ENCODE measurements at regions of chr1 and their contacts with region 1.

Region 1: DNA sequence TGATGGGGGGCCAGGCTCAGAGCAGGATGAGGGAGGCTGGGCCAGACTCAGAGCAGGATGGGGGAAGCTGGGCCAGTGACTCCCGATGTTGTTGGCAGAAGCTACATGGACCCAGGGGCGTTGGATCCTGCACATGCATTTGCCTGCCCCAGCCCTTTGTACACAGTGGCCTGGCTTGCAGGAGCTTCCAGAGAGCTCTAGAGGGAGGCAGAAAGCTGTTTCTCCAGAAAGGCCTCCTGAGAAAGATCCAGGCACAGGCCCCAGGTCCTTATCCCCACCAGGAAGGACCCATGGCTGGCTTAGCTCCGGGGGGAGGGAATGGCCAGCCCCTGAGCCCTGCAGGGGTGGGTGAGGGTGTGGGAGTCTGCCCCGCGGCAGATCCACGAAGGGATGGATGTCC is 106.6 kb upstream of the ACTRT2 start:
- DNase-seq: no peak

Region 2: GRCh38 chr1:1775327-1776226 is 1139.1 kb before region 1 on chr1:
- intact Hi-C with region 1: no loop called
- DNase-seq: no peak

Region 3: GRCh38 chr1:2845869-2846268 is 68.8 kb before region 1 on chr1:
- intact Hi-C with region 1: no loop called
- DNase-seq: no peak

Region 4: DNA sequence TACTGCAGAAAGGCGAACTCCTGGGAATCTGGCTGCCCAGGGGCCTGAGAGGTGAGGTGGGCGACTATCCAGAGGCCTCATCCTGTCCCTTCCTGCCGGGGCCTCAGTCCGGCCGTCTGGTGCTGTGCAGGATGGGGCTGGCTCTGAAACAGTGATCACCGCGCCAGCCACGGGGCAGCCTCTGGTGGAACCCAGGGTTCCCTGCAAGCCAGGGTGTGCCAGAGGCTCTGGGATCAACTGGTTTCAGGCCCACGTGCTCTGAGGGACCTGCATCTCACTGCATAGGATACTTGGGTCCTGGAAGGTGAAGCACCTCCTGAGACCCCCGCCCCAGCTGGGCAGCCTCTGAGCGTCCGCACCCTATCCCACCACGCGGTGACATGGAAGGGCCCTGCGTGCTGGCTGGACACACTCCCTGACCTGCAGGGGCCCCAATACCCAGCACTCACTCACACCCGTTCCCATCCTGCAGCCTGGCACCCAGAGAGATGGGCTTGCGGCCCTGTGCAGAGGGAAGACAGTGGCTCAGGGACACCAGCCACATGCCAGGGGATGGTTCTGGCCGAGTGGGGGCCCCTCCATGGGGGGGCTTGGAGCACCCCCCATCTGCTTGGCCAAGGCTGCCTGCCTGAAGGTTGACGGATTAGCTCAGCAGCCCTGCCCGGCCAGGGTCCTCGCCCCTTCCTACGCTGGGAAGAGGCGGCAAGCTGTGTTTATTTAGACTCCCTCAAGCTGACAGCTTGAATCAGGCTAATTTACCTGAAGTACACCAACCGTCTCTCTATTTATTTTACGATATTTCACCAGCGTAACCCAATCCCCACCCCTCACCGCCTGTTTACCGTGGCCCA is 48.9 kb before region 1 on chr1:
- intact Hi-C with region 1: loop called (anchors 5 kb)
- DNase-seq: no peak